Activated CD4-positive, alpha-beta memory T cell treated with anti-CD3 and anti-CD28 coated beads, Interleukin-2, amount 10 ng/mL, durations not matched to agents 7 days and 5 days (primary cell): ENCODE measurements at regions of chr13 and their contacts with region 1.

Region 1: DNA sequence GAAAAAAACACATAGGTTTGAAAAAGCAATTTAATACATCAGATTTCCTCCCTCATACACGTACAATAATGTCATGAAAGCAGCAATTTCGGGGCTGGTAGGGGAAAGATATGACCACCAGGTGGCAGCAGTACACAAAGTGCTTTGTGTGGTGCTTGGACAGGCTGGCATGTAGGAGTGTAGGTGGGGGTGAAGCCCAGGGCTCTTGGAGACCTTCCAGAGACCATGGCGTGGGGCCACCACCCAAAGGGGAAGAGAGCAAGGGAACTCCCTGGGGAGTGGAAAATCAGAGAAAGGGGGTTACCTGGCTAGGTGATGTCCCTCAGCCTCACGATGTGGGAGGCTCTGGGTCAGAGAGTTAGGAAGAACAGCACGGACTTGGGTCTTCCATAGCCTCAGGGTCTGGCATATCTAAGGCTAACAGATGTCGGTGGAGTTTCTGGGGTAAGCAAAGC is 11.8 kb upstream of the CCNA1 start:
- DNase-seq: peak; percentile 78
- H3K4me3 Mint-ChIP-seq: no peak overlapping the region
- H3K27ac Mint-ChIP-seq: no peak overlapping the region
- H3K4me1 Mint-ChIP-seq: peaks cover 39% of the 10 kb centered on the region
- H3K27me3 Mint-ChIP-seq: peaks cover 26% of the 10 kb centered on the region

Region 2: GRCh38 chr13:36346222-36347083 is 74.0 kb before region 1 on chr13 and contains the start of gene SPART:
- CTCF ChIA-PET with region 1: interaction called, 15 read pairs
- POLR2A ChIA-PET with region 1: no interaction called
- DNase-seq: peak; percentile 89
- H3K4me3 Mint-ChIP-seq: peak within 1 kb of the TSS; percentile 88
- H3K27ac Mint-ChIP-seq: peak within 1 kb of the TSS; percentile 91
- H3K4me1 Mint-ChIP-seq: peaks cover 27% of the 10 kb centered on the region
- H3K27me3 Mint-ChIP-seq: peaks cover 13% of the 10 kb centered on the region
- total RNA-seq, gene SPART: 23.6 to 24.0 TPM

Region 3: GRCh38 chr13:36430247-36431203 is 10.1 kb after region 1 on chr13:
- CTCF ChIA-PET with region 1: interaction called, 11 read pairs
- POLR2A ChIA-PET with region 1: interaction called, 3 read pairs
- DNase-seq: no peak
- H3K4me3 Mint-ChIP-seq: peak overlapping the region; percentile 28
- H3K27ac Mint-ChIP-seq: no peak overlapping the region
- H3K4me1 Mint-ChIP-seq: peaks cover 26% of the 10 kb centered on the region
- H3K27me3 Mint-ChIP-seq: peaks cover 64% of the 10 kb centered on the region

Region 4: DNA sequence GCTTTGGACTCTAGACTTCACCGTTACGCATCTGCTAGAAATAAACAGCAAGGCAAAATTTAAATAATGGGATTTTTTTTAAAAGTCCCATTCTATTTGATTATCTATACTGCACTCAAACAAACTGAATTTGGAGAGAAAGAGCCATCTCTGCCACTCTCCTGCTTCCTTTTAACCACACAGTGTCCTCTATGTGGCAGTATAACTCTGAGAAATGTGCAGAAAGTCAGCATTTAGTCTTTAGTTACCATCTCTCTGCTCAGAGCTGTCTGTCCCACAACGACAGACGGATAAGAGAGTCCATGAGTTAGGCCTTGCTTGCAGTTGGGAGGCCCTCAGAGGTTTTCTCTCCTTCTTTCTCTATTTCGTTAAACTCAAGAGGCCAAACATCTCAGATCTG is 33.1 kb after region 1 on chr13:
- CTCF ChIA-PET with region 1: no interaction called
- POLR2A ChIA-PET with region 1: no interaction called
- DNase-seq: no peak
- H3K4me3 Mint-ChIP-seq: no peak overlapping the region
- H3K27ac Mint-ChIP-seq: no peak overlapping the region
- H3K4me1 Mint-ChIP-seq: peaks cover 5% of the 10 kb centered on the region
- H3K27me3 Mint-ChIP-seq: peaks cover 10% of the 10 kb centered on the region

Region 5: DNA sequence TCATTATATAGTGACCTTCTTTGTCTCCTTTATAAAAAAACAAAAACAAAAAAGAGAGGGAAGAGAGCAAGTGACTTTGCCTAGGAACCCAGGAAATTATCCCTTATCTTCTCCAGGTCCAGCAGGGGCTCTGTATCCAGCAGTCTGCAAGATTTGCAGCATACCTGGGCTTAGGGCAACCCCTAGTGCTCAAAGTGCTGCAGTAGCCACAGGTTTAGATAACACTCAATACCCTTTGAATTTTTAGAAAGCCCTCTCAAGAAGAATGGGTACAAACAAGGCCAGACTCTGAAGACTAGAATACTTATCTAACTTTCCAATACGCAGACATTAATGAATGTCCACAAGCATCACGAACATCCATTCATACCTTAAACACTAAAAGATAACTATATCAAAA is 55.0 kb after region 1 on chr13:
- CTCF ChIA-PET with region 1: no interaction called
- POLR2A ChIA-PET with region 1: no interaction called
- DNase-seq: peak; percentile 16
- H3K4me3 Mint-ChIP-seq: no peak overlapping the region
- H3K27ac Mint-ChIP-seq: no peak overlapping the region
- H3K4me1 Mint-ChIP-seq: no peaks in the 10 kb centered on the region
- H3K27me3 Mint-ChIP-seq: peaks cover 4% of the 10 kb centered on the region

Region 6: DNA sequence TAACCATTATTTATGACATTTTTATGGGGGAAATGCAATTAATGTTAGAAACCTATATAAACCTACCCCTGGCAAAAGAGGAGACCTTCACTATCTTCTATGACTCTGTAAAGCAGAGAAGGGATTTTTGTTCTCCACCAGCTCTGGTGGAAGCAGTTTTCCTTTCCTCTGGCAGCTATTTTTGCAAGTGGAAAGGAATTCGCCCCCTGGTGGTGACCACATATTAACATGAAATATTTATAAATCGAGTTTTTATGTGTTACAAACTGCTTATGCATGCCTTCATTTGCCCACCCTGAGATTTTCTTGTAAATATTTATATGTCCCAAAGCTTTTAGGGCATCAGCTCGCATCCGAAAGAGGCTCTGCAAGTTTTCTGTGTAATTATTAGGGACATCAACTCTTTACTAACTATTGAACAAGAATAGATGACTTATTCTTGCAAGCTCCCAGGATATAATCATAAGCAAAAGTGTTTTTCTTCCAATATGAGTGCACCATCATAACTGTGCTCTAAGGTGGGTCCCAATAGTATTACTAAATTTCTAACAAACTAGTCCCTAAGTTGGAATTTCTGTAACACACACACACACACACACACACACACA is 315.8 kb after region 1 on chr13:
- CTCF ChIA-PET with region 1: interaction called, 47 read pairs
- POLR2A ChIA-PET with region 1: no interaction called
- DNase-seq: peak; percentile 29
- H3K4me3 Mint-ChIP-seq: no peak overlapping the region
- H3K27ac Mint-ChIP-seq: no peak overlapping the region
- H3K4me1 Mint-ChIP-seq: no peaks in the 10 kb centered on the region
- H3K27me3 Mint-ChIP-seq: peaks cover 7% of the 10 kb centered on the region